Adrenal gland (tissue), 19 donors: ENCODE measurements at regions of chr5 and their contacts with region 1.

Region 1: GRCh38 chr5:76771705-76772405 is 47.0 kb upstream of the F2RL1 start:
- DNase-seq: peak in 1 of 7 donors; percentile 5
- H3K4me3 ChIP-seq: no peak overlapping the region
- H3K27ac ChIP-seq: no peak overlapping the region
- H3K4me1 ChIP-seq: no peaks in the 10 kb centered on the region
- H3K27me3 ChIP-seq: no peaks in the 10 kb centered on the region
- CTCF ChIP-seq: no peak
- POLR2A ChIP-seq: no peak

Region 2: DNA sequence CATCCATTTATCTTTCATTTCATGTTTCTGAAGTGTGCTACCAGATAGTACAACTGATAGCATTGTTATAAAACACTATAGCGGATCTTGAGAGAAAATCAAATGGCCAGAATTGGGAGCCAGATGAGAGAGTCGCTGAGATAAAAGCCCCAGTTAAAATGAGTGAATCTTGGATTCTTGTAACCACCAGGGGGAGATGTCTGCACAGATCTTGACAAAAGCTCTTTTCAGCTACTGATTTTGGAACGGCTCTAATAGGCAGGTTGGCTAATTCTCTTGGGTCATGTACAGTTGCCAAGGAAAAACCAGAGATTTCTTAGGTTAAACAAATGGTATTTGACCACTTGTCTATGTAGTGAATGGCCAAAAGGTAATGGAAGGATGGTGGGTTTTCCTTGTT is 170.4 kb before region 1 on chr5:
- intact Hi-C with region 1: loop called (anchors 2 to 5 kb)
- DNase-seq: peak in 4 of 7 donors; percentile 27 to 47 (median 38)
- H3K4me3 ChIP-seq: no peak overlapping the region
- H3K27ac ChIP-seq: no peak overlapping the region
- H3K4me1 ChIP-seq: no peaks in the 10 kb centered on the region
- H3K27me3 ChIP-seq: no peaks in the 10 kb centered on the region
- CTCF ChIP-seq: peak; percentile 70 to 89 (median 78)
- POLR2A ChIP-seq: no peak

Region 3: GRCh38 chr5:76718381-76718832 is 53.4 kb before region 1 on chr5:
- intact Hi-C with region 1: loop called in 1 of 2 experiments (anchors 2 kb)
- DNase-seq: peak in 2 of 7 donors; percentile 33 to 39
- H3K4me3 ChIP-seq: peak overlapping the region in 1 of 4 donors; percentile 93
- H3K27ac ChIP-seq: peak overlapping the region in 1 of 5 donors; percentile 54
- H3K4me1 ChIP-seq: peaks cover 6 to 27% of the 10 kb centered on the region in 2 donors
- H3K27me3 ChIP-seq: no peaks in the 10 kb centered on the region
- CTCF ChIP-seq: no peak
- POLR2A ChIP-seq: peak in 1 of 2 donors; percentile 20